Mammary epithelial cell (primary cell): ENCODE measurements at regions of chr1 and their contacts with region 1.

Region 1: DNA sequence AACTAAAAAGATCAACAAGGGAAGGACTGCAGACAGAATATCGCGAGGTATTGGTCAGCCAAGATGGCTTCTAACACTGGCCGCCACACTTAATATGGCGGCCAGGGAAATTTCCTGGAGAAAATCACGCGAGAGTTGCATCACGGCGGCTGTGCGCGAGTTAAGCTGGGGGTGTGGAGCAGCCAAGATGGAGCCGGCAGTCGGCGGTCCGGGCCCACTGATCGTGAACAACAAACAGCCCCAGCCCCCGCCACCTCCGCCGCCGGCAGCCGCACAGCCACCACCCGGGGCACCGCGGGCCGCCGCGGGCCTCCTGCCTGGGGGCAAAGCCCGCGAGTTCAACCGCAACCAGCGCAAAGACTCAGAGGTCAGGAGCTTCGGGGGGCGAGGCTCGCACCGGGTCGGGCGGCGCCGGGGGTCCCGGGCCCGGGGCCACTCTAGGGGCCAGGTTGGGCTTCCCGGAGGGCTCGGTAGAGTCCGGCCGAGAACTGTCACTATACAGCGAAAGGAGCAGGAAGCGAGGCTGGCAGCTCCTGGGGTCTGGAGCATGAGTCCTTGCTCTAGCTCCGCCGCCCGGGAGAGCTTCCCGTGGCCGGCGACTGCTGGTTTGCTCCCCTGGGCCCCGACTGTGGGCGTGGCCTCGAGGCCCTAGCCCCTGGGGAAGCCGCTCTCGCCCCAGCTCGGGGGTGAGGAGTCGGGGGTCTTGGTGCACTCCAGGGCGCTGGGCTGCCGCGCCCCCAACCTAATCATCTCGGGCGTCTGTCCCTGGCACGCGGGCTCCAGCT is at the start of gene STRIP1:
- DNase-seq: peak; percentile 93
- H3K4me3 ChIP-seq: peak within 1 kb of the TSS; percentile 43 to 83 (median 83)
- H3K27ac ChIP-seq: peak within 1 kb of the TSS; percentile 77
- H3K4me1 ChIP-seq: peaks cover 20% of the 10 kb centered on the region
- H3K27me3 ChIP-seq: no peaks in the 10 kb centered on the region
- CTCF ChIP-seq: no peak
- total RNA-seq, gene STRIP1: 39.4 to 51.3 TPM

Region 2: DNA sequence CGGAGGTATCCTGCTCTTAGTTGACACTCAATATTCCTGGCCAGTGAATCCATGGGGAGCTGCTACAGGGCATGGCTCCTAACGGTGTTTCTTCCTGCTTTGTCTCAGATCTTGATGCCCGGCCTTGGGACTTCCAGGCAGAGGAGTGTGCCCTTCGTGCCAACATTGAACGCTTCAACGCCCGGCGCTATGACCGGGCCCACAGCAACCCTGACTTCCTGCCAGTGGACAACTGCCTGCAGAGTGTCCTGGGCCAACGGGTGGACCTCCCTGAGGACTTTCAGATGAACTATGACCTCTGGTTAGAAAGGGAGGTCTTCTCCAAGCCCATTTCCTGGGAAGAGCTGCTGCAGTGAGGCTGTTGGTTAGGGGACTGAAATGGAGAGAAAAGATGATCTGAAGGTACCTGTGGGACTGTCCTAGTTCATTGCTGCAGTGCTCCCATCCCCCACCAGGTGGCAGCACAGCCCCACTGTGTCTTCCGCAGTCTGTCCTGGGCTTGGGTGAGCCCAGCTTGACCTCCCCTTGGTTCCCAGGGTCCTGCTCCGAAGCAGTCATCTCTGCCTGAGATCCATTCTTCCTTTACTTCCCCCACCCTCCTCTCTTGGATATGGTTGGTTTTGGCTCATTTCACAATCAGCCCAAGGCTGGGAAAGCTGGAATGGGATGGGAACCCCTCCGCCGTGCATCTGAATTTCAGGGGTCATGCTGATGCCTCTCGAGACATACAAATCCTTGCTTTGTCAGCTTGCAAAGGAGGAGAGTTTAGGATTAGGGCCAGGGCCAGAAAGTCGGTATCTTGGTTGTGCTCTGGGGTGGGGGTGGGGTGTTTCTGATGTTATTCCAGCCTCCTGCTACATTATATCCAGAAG is 19.1 kb after region 1 on chr1:
- CTCF ChIA-PET with region 1: interaction called, 4 read pairs
- dilution Hi-C with region 1: no loop called
- in situ Hi-C with region 1: no loop called
- intact Hi-C with region 1: loop called (anchors 1 kb)
- DNase-seq: no peak
- H3K4me3 ChIP-seq: no peak overlapping the region
- H3K27ac ChIP-seq: no peak overlapping the region
- H3K4me1 ChIP-seq: peaks cover 24% of the 10 kb centered on the region
- H3K27me3 ChIP-seq: no peaks in the 10 kb centered on the region
- CTCF ChIP-seq: peak; percentile 93 to 99